K562 (cell line): ENCODE measurements at regions of chr5 and their contacts with region 1.

Region 1: DNA sequence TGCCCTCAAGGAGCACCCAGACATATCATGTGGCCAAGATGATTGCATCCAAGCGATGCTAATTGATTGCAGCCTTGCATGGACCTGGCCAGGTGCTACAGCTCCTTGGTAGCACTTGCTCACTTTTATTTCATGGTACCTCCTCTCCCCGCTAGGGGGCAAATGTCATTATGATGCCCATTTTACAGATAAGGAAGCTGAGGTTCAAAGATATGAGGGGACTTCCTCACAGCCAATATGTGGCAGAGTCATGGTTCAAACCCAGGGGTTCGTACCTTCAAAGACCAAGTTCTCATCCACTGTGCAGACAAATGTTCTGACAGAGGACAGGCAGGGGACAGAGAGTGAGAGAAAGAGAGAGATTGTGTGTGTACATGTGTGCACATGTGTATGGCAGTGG is 21.9 kb upstream of the KCNMB1 start:
- DNase-seq: peak in 3 of 4 experiments; percentile 14 to 35 (median 32)
- ATAC-seq: no peak
- H3K4me3 ChIP-seq: no peak overlapping the region
- H3K27ac ChIP-seq: no peak overlapping the region
- H3K4me1 ChIP-seq: no peaks in the 10 kb centered on the region
- H3K27me3 ChIP-seq: peaks cover 0 to 12% of the 10 kb centered on the region in 2 experiments; a peak in 1 of 5 replicates
- CTCF ChIP-seq: peak; percentile 32 to 53 (median 38); a peak in 4 of 6 replicates
- EP300 ChIP-seq: no peak
- POLR2A ChIP-seq: no peak
- RAD21 ChIP-seq: no peak

Region 2: DNA sequence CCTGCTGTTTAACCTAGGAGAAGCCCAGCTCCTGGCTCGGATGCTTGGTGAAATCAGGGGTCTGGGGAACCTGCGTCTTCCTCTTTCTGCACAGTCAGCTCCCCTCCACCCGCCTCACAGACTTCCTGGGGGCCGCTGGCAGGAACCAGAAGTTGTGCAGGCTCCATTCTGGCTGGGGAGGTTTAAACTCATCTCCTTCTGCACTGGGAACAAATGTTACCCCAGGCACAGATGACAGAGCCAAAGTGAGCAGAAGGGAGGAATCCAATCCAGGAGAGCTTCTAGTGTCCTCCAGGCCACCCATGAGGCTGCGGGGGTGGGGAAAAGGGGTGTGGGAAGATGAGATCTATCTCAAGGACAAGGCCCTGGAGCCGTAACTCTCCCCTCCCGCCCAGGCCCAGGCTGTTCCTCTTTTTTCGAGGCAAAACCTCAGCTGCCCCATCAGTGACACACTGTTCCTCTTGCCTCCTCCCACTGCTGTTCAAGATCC is 53.1 kb before region 1 on chr5:
- CTCF ChIA-PET with region 1: no interaction called
- POLR2A ChIA-PET with region 1: no interaction called
- in situ Hi-C with region 1: no loop called
- intact Hi-C with region 1: loop called (anchors 5 kb)
- DNase-seq: peak; percentile 54 to 64 (median 56)
- ATAC-seq: peak; percentile 75
- H3K4me3 ChIP-seq: no peak overlapping the region
- H3K27ac ChIP-seq: no peak overlapping the region
- H3K4me1 ChIP-seq: peaks cover 0 to 10% of the 10 kb centered on the region in 2 experiments
- H3K27me3 ChIP-seq: peaks cover 20 to 40% of the 10 kb centered on the region in 2 experiments
- CTCF ChIP-seq: no peak
- EP300 ChIP-seq: no peak
- POLR2A ChIP-seq: no peak
- RAD21 ChIP-seq: no peak